Esophagus muscularis mucosa (tissue), 4 donors: ENCODE measurements at regions of chrX and their contacts with region 1.

Region 1: DNA sequence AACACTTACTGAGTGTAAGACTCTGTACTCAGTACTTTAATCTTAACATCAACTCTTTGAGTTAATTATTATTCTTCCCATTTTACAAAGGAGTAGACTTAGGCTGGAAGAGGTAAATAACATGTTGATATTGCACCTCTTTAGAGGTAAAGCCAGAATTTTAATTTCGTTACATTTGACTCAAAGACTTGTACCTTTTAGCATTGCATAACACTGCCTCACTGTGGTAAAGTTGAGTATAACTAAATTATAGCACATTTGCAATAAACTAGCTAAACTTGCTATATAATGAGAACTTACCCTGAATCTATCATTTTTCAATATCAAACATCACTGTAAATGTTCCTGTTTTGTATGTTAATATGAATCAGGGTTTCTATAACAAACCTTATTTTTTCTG is 218.5 kb downstream of the PRR32 start:
- DNase-seq: no peak
- H3K4me3 ChIP-seq: no peak overlapping the region
- H3K27ac ChIP-seq: no peak overlapping the region
- H3K4me1 ChIP-seq: no peaks in the 10 kb centered on the region
- H3K27me3 ChIP-seq: no peaks in the 10 kb centered on the region
- CTCF ChIP-seq: peak in 1 of 3 experiments; percentile 29
- EP300 ChIP-seq: no peak
- POLR2A ChIP-seq: no peak

Region 2: DNA sequence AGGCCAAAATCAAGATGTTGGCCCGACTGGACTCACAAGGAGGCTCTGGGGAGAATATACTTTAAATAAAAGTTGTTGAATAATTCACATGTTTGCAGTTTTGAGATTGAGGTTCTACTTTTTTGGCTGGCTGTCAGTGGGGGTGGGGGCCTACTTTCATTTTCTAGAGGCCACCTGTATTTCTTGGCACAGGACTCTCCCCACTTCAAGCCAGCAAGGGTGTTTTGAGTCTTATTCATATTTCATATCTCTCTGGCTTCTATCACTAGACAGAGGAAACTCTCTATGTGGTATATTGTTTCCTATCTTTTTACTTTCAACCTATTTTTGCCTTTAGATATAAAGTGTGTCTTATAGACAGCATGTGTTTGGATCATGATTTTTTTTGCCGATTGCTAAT is 47.9 kb after region 1 on chrX:
- intact Hi-C with region 1: loop called (anchors 10 kb)
- DNase-seq: no peak
- H3K4me3 ChIP-seq: no peak overlapping the region
- H3K27ac ChIP-seq: no peak overlapping the region
- H3K4me1 ChIP-seq: no peaks in the 10 kb centered on the region
- H3K27me3 ChIP-seq: no peaks in the 10 kb centered on the region
- CTCF ChIP-seq: no peak
- EP300 ChIP-seq: no peak
- POLR2A ChIP-seq: no peak